Activated naive CD4-positive, alpha-beta T cell treated with anti-CD3 and anti-CD28 coated beads for 36 hours (primary cell): ENCODE measurements at regions of chr3 and their contacts with region 1.

Region 1: GRCh38 chr3:195909644-195910508 is 1.5 kb upstream of the TNK2 start:
- DNase-seq: peak; percentile 89
- H3K4me3 Mint-ChIP-seq: peak overlapping the region; percentile 70
- H3K27ac Mint-ChIP-seq: no peak overlapping the region
- H3K4me1 Mint-ChIP-seq: peaks cover 33% of the 10 kb centered on the region
- H3K27me3 Mint-ChIP-seq: no peaks in the 10 kb centered on the region

Region 2: DNA sequence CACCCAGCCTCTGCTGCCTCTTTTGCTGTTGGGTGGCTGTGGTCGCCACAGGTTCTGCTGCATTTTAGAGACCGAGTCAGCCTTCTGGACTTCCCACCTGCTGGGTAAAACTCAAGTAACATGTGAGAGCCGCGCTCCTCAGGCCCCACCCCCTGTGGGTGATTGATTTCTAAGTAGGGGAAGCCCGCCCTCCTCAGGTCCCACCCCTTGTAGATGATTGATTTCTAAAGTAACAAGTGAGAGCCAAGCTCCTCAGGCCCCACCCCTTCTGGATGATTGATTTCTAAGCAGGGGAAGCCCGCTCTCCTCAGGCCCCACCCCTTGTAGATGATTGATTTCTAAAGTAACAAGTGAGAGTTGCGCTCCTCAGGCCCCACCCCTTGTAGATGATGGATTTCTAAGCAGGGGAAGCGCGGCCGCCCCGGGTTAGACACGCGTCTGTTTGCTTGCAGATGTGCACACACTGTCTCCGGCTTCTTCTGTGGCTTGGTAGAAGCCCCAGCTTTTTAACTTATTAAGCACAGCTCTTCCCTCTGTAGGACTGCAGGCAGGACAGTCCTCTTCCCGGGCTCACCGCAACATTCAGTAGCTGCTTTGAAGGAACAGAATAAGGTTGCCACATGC is 1140.7 kb before region 1 on chr3:
- CTCF ChIA-PET with region 1: no interaction called
- intact Hi-C with region 1: no loop called
- DNase-seq: peak; percentile 99
- H3K4me3 Mint-ChIP-seq: peak overlapping the region; percentile 70
- H3K27ac Mint-ChIP-seq: peak overlapping the region; percentile 66
- H3K4me1 Mint-ChIP-seq: peaks cover 11% of the 10 kb centered on the region
- H3K27me3 Mint-ChIP-seq: no peaks in the 10 kb centered on the region

Region 3: GRCh38 chr3:195542698-195543499 is 367.0 kb before region 1 on chr3 and contains the start of gene PPP1R2:
- CTCF ChIA-PET with region 1: interaction called, 4 read pairs
- intact Hi-C with region 1: loop called (anchors 2 kb)
- DNase-seq: peak; percentile 93
- H3K4me3 Mint-ChIP-seq: peak within 1 kb of the TSS; percentile 88
- H3K27ac Mint-ChIP-seq: peak within 1 kb of the TSS; percentile 94
- H3K4me1 Mint-ChIP-seq: peaks cover 53% of the 10 kb centered on the region
- H3K27me3 Mint-ChIP-seq: no peaks in the 10 kb centered on the region
- total RNA-seq, gene PPP1R2: 99.7 to 105 TPM

Region 4: GRCh38 chr3:195558602-195559001 is 351.3 kb before region 1 on chr3:
- CTCF ChIA-PET with region 1: no interaction called
- intact Hi-C with region 1: loop called (anchors 5 kb)
- DNase-seq: peak; percentile 67
- H3K4me3 Mint-ChIP-seq: no peak overlapping the region
- H3K27ac Mint-ChIP-seq: no peak overlapping the region
- H3K4me1 Mint-ChIP-seq: peaks cover 37% of the 10 kb centered on the region
- H3K27me3 Mint-ChIP-seq: no peaks in the 10 kb centered on the region

Region 5: DNA sequence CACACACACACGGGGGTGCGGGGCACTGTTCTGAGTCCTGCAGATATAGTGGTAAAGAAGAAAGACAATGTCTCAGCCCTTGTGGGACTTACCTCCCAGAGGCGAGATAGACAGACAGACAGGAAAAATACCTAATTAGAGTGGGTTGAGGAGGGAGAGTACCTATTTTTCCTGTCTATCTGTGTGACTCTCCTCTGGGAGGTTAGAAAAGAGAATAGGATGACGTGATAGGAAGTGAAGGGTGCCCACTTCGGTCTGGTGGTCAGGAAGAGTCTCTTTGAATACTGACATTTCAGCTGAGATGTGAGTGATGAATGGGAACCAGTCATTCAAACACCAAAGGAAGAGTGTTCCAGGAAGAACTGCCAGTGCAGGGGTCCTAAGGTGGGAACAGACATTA is 322.1 kb before region 1 on chr3:
- CTCF ChIA-PET with region 1: no interaction called
- intact Hi-C with region 1: loop called (anchors 2 kb)
- DNase-seq: peak; percentile 28
- H3K4me3 Mint-ChIP-seq: no peak overlapping the region
- H3K27ac Mint-ChIP-seq: no peak overlapping the region
- H3K4me1 Mint-ChIP-seq: peaks cover 9% of the 10 kb centered on the region
- H3K27me3 Mint-ChIP-seq: no peaks in the 10 kb centered on the region

Region 6: DNA sequence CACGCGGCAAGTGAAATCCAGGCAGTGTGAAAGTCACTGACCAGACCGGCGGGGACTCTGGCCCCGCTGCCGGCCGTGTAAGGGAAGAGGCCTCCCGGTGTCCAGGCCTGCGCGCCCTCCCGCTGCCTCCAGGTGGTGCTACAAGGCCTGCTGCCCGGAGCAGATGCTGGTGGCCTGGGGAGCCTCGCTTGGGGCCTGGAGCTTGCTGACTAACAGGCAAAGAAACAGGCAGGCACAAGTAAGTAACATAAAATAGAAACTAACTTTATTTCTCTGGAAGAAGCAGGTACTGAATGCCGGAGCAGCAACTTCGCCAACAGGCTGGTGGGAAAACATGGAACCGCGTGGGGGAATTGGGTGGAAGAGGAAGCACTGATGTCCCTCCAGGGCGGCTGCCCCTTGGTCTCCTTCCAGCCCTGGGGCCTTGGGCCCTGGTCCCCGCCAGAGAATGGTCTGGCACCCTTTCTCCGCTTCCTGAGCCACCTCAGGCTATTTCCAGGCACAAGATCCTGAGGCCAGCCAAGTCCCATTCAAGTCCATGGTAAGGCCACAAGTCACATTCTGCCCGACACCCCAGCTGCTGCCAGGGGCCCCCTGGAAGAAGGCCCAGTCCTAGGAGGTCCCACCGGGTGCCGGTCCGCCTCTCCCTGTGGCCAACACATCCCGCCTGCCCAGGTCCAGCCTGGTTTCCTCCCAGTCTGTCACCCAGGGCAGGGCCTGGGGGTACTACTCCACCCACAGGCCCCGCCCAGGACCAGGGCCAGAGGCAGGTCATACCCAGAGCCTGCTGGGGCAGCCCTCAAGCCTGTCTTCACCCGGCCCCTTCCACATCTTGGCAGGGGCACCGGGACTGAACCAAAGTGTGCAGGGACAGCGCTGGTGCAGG is 46.5 kb before region 1 on chr3:
- CTCF ChIA-PET with region 1: interaction called, 96 read pairs
- intact Hi-C with region 1: loop called (anchors 1 kb)
- DNase-seq: peak; percentile 79
- H3K4me3 Mint-ChIP-seq: no peak overlapping the region
- H3K27ac Mint-ChIP-seq: peak overlapping the region; percentile 36
- H3K4me1 Mint-ChIP-seq: peaks cover 8% of the 10 kb centered on the region
- H3K27me3 Mint-ChIP-seq: no peaks in the 10 kb centered on the region

Region 7: DNA sequence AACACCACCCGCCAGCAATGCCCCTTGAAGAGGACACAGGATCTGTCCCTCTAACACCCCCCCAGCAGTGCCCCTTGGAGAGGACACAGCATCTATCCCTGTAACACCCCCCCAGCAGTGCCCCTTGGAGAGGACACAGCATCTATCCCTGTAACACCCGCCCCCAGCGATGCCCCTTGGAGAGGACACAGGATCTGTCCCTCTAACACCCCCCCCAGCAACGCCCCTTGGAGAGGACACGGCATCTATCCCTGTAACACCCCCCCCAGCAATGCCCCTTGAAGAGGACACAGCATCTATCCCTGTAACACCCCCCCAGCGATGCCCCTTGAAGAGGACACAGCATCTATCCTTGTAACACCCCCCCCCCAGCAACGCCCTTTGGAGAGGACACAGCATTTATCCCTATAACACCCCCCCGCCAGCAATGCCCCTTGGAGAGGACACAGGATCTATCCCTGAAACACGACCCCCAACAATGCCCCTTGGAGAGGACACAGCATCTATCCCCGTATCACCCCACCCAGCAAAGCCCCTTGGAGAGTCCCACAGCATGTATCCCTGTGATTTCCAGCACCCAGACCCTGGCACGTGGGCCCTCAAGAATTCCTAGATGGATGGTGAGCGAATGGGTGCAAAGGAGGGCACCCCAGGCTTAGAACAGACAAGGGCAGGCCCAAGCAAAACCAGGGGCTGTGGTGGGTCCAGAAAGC is 28.4 kb before region 1 on chr3:
- CTCF ChIA-PET with region 1: no interaction called
- intact Hi-C with region 1: no loop called
- DNase-seq: no peak
- H3K4me3 Mint-ChIP-seq: no peak overlapping the region
- H3K27ac Mint-ChIP-seq: no peak overlapping the region
- H3K4me1 Mint-ChIP-seq: no peaks in the 10 kb centered on the region
- H3K27me3 Mint-ChIP-seq: no peaks in the 10 kb centered on the region

Region 8: GRCh38 chr3:195894780-195895607 is 14.9 kb before region 1 on chr3:
- CTCF ChIA-PET with region 1: interaction called, 99 read pairs
- intact Hi-C with region 1: loop called (anchors 1 kb)
- DNase-seq: peak; percentile 81
- H3K4me3 Mint-ChIP-seq: peak overlapping the region; percentile 87
- H3K27ac Mint-ChIP-seq: peak overlapping the region; percentile 86
- H3K4me1 Mint-ChIP-seq: peaks cover 44% of the 10 kb centered on the region
- H3K27me3 Mint-ChIP-seq: no peaks in the 10 kb centered on the region

Region 9: GRCh38 chr3:195956571-195956970 is 46.7 kb after region 1 on chr3:
- CTCF ChIA-PET with region 1: interaction called, 4 read pairs
- intact Hi-C with region 1: loop called (anchors 5 kb)
- DNase-seq: no peak
- H3K4me3 Mint-ChIP-seq: no peak overlapping the region
- H3K27ac Mint-ChIP-seq: no peak overlapping the region
- H3K4me1 Mint-ChIP-seq: peaks cover 25% of the 10 kb centered on the region
- H3K27me3 Mint-ChIP-seq: no peaks in the 10 kb centered on the region